ENCODE measurements at regions of chr15 and their contacts with region 1.

Region 1: DNA sequence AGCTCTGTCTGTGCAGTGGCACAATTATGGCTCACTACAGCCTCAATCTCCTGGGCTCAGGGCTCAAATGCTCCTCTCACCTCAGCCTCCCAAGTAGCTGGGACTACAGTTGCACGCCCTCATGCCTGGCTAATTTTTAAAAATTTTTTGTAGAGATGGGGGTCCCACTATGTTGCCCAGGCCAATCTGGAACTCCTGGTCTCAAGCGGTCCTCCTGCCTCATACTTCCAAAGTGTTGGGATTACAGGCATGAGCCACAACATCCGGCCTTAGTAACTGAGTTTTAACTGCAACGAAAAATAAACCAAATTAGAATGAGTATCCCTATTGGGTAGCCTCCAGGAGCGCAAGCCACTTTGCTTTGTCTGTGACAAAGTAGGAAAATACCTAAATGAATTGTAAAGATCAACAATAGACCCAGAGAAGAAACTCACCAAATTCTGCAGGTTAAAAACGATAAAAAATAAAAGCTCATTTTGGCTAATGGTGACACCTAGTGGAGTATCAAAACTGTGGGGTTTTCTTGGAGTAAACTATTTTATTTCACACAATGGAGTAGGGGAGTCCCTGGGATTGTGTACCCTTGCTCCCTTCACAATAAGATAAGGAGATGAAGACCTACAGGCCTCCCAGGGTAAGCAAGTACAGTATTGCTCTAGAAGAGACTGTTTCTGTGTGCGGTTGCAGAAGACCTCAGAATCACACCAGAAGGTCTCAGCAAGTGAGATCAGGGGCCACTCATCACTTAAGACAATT is 21.0 kb upstream of the CA12 start:
- DNase-seq: no peak
- H3K4me3 Mint-ChIP-seq: no peak overlapping the region
- H3K27ac Mint-ChIP-seq: no peak overlapping the region
- H3K4me1 Mint-ChIP-seq: peaks cover 5% of the 10 kb centered on the region
- H3K27me3 Mint-ChIP-seq: no peaks in the 10 kb centered on the region

Region 2: DNA sequence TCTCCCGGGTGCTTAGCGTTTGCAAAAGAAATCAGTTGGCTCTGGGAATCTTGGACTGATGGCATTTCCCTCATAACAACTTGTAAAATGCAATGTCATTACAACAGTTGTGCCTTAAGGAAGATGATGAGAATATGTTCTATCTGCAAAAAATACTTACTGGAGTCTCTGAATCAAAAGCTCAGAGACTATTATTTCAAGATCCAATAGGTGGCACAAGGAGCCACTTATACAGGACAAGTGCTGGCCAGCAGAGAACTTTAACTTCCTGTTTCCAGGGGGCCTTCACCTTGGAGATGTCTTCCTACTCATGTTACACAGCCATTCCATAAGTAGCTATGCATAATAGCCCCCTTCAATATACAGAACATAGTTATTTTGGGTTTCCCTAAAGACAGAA is 236.5 kb before region 1 on chr15:
- CTCF ChIA-PET with region 1: no interaction called
- intact Hi-C with region 1: loop called (anchors 10 kb)
- DNase-seq: no peak
- H3K4me3 Mint-ChIP-seq: no peak overlapping the region
- H3K27ac Mint-ChIP-seq: no peak overlapping the region
- H3K4me1 Mint-ChIP-seq: peaks cover 4% of the 10 kb centered on the region
- H3K27me3 Mint-ChIP-seq: no peaks in the 10 kb centered on the region

Region 3: GRCh38 chr15:63539521-63539920 is 136.8 kb after region 1 on chr15:
- CTCF ChIA-PET with region 1: no interaction called
- intact Hi-C with region 1: no loop called
- DNase-seq: no peak
- H3K4me3 Mint-ChIP-seq: no peak overlapping the region
- H3K27ac Mint-ChIP-seq: no peak overlapping the region
- H3K4me1 Mint-ChIP-seq: peaks cover 64% of the 10 kb centered on the region
- H3K27me3 Mint-ChIP-seq: no peaks in the 10 kb centered on the region

Measured in activated naive CD4-positive, alpha-beta T cell treated with anti-CD3 and anti-CD28 coated beads for 36 hours (primary cell).